ENCODE measurements at regions of chr3 and their contacts with region 1.

Region 1: GRCh38 chr3:71652781-71653413 is 69.4 kb upstream of the FOXP1 start:
- DNase-seq: peak; percentile 37
- H3K4me3 ChIP-seq: no peak overlapping the region
- H3K27ac ChIP-seq: no peak overlapping the region
- H3K4me1 ChIP-seq: peaks cover 0 to 12% (median 6%) of the 10 kb centered on the region in 4 donors
- H3K27me3 ChIP-seq: no peaks in the 10 kb centered on the region
- CTCF ChIP-seq: peak; percentile 30 to 48 (median 45)
- EP300 ChIP-seq: no peak
- POLR2A ChIP-seq: no peak

Region 2: GRCh38 chr3:70064194-70064779 is 1588.6 kb before region 1 on chr3:
- in situ Hi-C with region 1: loop called in 1 of 4 experiments (anchors 25 kb)
- intact Hi-C with region 1: no loop called
- DNase-seq: no peak
- H3K4me3 ChIP-seq: no peak overlapping the region
- H3K27ac ChIP-seq: no peak overlapping the region
- H3K4me1 ChIP-seq: no peaks in the 10 kb centered on the region
- H3K27me3 ChIP-seq: no peaks in the 10 kb centered on the region
- CTCF ChIP-seq: peak; percentile 52 to 58 (median 58)
- EP300 ChIP-seq: no peak
- POLR2A ChIP-seq: no peak

Region 3: DNA sequence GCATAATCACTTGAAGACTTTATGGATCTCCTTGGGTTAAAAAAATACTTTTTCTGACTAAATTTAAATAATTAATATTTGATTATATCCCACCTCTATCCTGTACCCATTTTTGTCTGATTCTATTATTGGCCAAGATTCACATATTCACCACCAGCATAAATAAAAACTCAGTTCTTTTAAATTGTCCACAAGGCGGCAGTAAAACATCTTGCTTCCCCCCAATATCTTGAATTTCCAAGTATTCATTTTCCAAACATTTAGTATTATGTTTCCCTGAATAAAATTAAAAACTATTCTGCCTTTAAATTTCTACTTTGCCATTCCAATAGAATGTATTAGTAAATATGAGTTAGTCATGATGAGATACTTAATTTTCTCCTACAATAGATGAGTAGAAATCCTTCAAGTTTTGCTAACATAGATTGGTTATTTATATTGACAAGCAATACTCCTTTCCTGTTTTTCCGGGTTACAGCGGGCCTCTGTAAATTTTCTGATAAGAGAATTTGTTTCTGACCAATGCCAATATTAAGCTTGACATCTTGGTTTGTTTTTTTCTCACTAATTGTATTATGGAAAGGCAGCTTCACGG is 1121.7 kb before region 1 on chr3:
- in situ Hi-C with region 1: loop called in 1 of 4 experiments (anchors 25 kb)
- intact Hi-C with region 1: no loop called
- DNase-seq: no peak
- H3K4me3 ChIP-seq: no peak overlapping the region
- H3K27ac ChIP-seq: no peak overlapping the region
- H3K4me1 ChIP-seq: no peaks in the 10 kb centered on the region
- H3K27me3 ChIP-seq: no peaks in the 10 kb centered on the region
- CTCF ChIP-seq: peak; percentile 33 to 50 (median 48)
- EP300 ChIP-seq: no peak
- POLR2A ChIP-seq: no peak

Region 4: GRCh38 chr3:70539908-70540307 is 1113.0 kb before region 1 on chr3:
- in situ Hi-C with region 1: loop called in 2 of 4 experiments (anchors 10 to 25 kb)
- intact Hi-C with region 1: no loop called
- DNase-seq: no peak
- H3K4me3 ChIP-seq: no peak overlapping the region
- H3K27ac ChIP-seq: no peak overlapping the region
- H3K4me1 ChIP-seq: no peaks in the 10 kb centered on the region
- H3K27me3 ChIP-seq: no peaks in the 10 kb centered on the region
- CTCF ChIP-seq: no peak
- EP300 ChIP-seq: no peak
- POLR2A ChIP-seq: no peak